ENCODE measurements at regions of chr1 and their contacts with region 1.

Region 1: DNA sequence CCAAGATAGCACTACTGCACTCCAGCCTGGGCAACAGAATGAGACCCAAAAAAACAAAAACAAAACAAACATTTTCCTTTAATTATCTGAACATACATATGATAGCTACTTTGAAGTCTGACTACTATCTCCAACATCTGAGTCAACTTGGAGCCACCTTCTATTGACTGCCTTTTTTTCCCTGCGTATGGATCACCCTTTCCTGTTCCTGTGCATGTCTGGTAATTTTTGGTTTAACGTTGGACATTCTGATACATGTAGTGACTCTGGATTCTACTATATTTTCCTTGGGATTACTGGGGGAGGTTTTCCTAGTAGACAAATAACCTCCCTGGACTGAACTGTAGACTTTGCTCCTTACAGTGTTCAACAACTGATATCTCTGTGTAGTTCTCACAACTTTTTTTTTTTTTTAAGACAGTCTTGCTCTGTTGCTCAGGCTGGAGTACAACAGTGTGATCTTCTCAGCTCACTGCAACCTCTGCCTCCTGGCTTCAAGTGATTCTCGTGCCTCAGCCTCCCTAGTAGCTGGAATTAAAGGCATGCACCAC is 70.3 kb downstream of the KIAA0319L start:
- DNase-seq: no peak
- H3K4me3 ChIP-seq: no peak overlapping the region
- H3K27ac ChIP-seq: no peak overlapping the region
- H3K4me1 ChIP-seq: no peaks in the 10 kb centered on the region
- H3K27me3 ChIP-seq: no peaks in the 10 kb centered on the region
- CTCF ChIP-seq: no peak

Region 2: DNA sequence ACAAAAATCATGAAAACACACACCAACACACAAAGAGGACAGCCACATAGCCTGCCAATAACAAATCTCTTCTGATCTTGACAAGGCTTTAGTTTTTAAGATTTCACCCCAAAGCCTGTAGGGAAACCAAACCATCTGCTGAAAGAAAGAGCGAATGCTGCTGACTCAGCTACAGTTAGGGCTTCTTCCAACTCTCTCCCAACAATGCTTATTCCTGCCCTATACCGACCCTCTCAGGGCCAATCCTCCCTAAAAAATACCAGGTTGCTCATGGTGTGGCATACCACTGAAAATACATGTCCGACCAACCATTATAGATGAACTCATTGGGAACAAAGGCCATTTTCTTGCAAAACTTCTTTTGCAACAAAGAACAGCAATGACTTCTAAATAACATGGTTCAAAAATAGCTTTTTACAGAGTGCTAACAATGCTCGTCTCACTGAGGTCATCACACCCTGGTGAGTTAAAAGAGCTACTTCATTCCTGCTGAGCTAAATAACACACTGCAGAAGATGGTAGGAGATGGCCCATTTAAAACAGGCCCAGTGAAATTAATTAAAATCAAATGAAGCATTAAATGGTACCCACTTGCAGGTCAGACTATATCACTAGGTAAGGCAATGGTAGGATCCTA is 15.8 kb before region 1 on chr1:
- CTCF ChIA-PET with region 1: no interaction called
- POLR2A ChIA-PET with region 1: no interaction called
- intact Hi-C with region 1: no loop called
- DNase-seq: no peak
- H3K4me3 ChIP-seq: no peak overlapping the region
- H3K27ac ChIP-seq: no peak overlapping the region
- H3K4me1 ChIP-seq: peaks cover 17% of the 10 kb centered on the region
- H3K27me3 ChIP-seq: no peaks in the 10 kb centered on the region
- CTCF ChIP-seq: no peak

Region 3: DNA sequence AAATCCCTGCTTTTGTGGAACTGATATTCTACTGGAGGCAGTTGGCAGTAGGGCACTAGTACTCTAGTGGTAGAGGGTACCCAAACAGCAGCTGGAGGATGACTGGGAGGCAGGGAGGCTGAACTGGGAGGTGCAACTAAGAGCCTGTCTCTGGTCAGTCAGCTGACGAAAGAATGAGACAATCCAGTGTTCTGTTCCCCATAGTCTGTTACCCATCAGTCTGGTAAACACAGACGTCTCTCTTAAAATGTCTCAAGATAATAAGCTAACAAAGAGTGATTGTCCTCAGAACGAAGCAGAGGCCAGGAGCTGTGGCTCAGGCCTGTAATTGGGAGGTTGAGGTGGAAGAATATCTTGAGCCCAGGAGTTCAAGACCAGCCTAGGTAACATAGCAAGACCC is 116.5 kb after region 1 on chr1:
- CTCF ChIA-PET with region 1: interaction called, 12 read pairs
- POLR2A ChIA-PET with region 1: no interaction called
- intact Hi-C with region 1: no loop called
- DNase-seq: no peak
- H3K4me3 ChIP-seq: no peak overlapping the region
- H3K27ac ChIP-seq: no peak overlapping the region
- H3K4me1 ChIP-seq: no peaks in the 10 kb centered on the region
- H3K27me3 ChIP-seq: no peaks in the 10 kb centered on the region
- CTCF ChIP-seq: no peak